ENCODE measurements at regions of chr2 and their contacts with region 1.

Region 1: DNA sequence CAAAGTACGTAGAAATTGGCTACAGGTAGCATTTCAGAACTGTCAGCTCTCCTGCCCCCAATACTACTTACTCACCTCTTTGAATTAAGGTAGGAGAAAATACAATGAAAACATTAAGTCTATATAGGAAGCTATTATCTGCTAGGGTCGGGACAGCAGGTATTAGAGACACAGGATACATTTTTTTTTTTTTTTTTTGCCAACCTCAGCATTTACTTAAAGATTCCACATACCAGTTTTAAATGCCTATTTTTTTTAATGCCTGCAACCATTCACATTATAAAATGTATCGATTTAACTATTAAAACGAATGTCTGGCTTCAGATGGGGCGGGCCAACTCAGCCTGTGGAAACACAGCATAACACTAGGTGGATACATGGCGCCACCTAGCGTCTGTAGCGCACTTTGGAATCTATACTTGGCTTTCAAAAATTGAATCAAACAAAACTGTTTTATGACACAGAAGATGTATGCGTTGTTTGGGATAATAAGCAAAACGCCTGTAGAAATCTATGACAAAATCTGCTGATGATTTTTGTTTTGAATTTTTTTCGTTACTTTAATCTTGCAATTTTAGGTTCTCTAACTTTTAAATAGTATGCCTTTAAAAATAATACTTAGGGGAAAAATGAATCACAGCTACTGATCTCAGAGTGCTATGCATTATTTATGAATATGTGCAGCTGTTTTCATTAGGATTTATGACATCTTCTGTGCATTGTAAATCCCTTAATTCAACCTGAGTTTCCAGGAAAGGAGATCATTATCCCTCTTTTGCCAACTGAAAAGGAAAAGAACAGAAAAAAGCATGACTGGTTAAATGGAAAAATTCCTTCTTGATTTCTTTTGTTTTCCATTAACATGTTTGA is 261.0 kb downstream of the NYAP2 start:
- DNase-seq: peak; percentile 63
- ATAC-seq: peak; percentile 91
- H3K4me3 ChIP-seq: no peak overlapping the region
- H3K27ac ChIP-seq: no peak overlapping the region
- H3K4me1 ChIP-seq: no peaks in the 10 kb centered on the region
- H3K27me3 ChIP-seq: peaks cover 3% of the 10 kb centered on the region
- CTCF ChIP-seq: peak; percentile 93
- POLR2A ChIP-seq: no peak
- RAD21 ChIP-seq: peak; percentile 97

Region 2: GRCh38 chr2:224802407-224802806 is 858.1 kb before region 1 on chr2:
- CTCF ChIA-PET with region 1: no interaction called
- POLR2A ChIA-PET with region 1: no interaction called
- dilution Hi-C with region 1: no loop called
- in situ Hi-C with region 1: no loop called
- intact Hi-C with region 1: loop called (anchors 5 kb)
- DNase-seq: peak; percentile 55
- ATAC-seq: no peak; the same call in 1 of the 2 replicates
- H3K4me3 ChIP-seq: no peak overlapping the region
- H3K27ac ChIP-seq: no peak overlapping the region
- H3K4me1 ChIP-seq: peaks cover 3% of the 10 kb centered on the region; the same call in 1 of the 2 replicates
- H3K27me3 ChIP-seq: no peaks in the 10 kb centered on the region
- CTCF ChIP-seq: no peak
- POLR2A ChIP-seq: no peak
- RAD21 ChIP-seq: no peak

Region 3: DNA sequence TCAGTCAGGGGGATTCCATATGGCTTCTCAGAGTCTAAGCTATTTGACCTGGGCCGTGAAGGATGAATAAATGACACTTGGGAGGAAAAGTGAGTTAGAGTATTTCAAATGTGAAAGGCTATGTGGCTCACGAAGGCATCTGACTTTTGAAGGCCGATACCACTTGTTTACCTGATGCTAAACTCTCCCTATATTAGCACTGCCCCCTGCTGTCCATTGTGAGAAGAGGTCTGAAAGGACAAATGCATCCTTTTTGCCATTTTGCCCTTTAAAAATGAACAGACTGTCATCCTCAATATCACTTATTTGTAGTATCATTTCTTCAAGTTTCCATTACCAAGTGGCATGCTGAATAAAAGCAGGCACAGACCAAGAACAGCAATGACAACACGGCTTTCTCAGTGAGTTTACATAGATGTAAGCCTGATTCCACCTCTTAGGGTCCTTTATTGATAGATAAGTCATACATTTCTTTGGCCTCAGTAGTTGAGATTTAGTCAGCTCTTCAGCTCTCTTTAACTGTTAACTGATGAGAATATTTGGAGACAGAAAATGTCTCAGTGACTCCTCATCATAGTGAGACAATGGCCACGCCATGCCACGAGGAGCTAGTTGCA is 658.4 kb before region 1 on chr2:
- CTCF ChIA-PET with region 1: no interaction called
- POLR2A ChIA-PET with region 1: no interaction called
- dilution Hi-C with region 1: no loop called
- in situ Hi-C with region 1: loop called (anchors 25 kb)
- intact Hi-C with region 1: loop called (anchors 2 kb)
- DNase-seq: peak; percentile 78
- ATAC-seq: peak; percentile 74
- H3K4me3 ChIP-seq: no peak overlapping the region
- H3K27ac ChIP-seq: peak overlapping the region; percentile 20; the same call in 1 of the 2 replicates
- H3K4me1 ChIP-seq: peaks cover 9% of the 10 kb centered on the region
- H3K27me3 ChIP-seq: no peaks in the 10 kb centered on the region
- CTCF ChIP-seq: peak; percentile 88
- POLR2A ChIP-seq: no peak
- RAD21 ChIP-seq: peak; percentile 92

Region 4: GRCh38 chr2:225122583-225123486 is 537.7 kb before region 1 on chr2:
- CTCF ChIA-PET with region 1: interaction called, 11 read pairs
- POLR2A ChIA-PET with region 1: no interaction called
- dilution Hi-C with region 1: no loop called
- in situ Hi-C with region 1: no loop called
- intact Hi-C with region 1: loop called (anchors 1 kb)
- DNase-seq: peak; percentile 47
- ATAC-seq: peak; percentile 70; the same call in 1 of the 2 replicates
- H3K4me3 ChIP-seq: no peak overlapping the region
- H3K27ac ChIP-seq: no peak overlapping the region
- H3K4me1 ChIP-seq: no peaks in the 10 kb centered on the region; the same call in 1 of the 2 replicates
- H3K27me3 ChIP-seq: no peaks in the 10 kb centered on the region
- CTCF ChIP-seq: peak; percentile 65
- POLR2A ChIP-seq: no peak
- RAD21 ChIP-seq: peak; percentile 72

Region 5: GRCh38 chr2:226984750-226985582 is 1324.5 kb after region 1 on chr2:
- CTCF ChIA-PET with region 1: interaction called, 7 read pairs
- POLR2A ChIA-PET with region 1: no interaction called
- dilution Hi-C with region 1: no loop called
- in situ Hi-C with region 1: loop called (anchors 10 kb)
- intact Hi-C with region 1: no loop called
- DNase-seq: peak; percentile 83
- ATAC-seq: peak; percentile 92
- H3K4me3 ChIP-seq: no peak overlapping the region
- H3K27ac ChIP-seq: no peak overlapping the region
- H3K4me1 ChIP-seq: 0 out of 2 replicates have a peak, but pooled peaks cover 4% of the 10 kb centered on the region
- H3K27me3 ChIP-seq: no peaks in the 10 kb centered on the region
- CTCF ChIP-seq: peak; percentile 86
- POLR2A ChIP-seq: 0 out of 2 replicates have a peak, but pooled peaks have one; percentile 24
- RAD21 ChIP-seq: peak; percentile 92

Measured in IMR-90 (cell line).